T-cell (primary cell): ENCODE measurements at regions of chr6 and their contacts with region 1.

Region 1: DNA sequence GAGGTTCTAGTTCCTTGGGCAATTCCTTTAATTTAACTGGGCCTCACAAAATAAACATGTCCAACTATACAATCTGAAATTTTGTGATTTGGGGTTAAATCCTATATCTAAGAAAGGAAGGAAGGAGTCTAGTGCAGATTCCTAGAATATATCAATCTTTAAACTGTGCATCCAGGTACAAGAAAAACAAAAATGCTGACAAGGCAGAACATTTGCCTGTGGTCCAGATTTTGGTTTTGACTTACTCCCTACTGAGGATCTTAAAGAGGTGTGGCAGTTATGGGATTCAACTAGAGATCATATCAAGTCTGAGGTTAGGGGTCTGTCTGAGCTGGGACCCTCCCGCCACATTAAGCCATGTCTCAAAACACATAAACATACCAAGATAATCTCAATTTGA is 17.7 kb upstream of the COX7A2 start:
- DNase-seq: no peak
- ATAC-seq: no peak
- H3K4me3 ChIP-seq: no peak overlapping the region
- H3K4me3 Mint-ChIP-seq: no peak overlapping the region
- H3K27ac ChIP-seq: no peak overlapping the region
- H3K27ac Mint-ChIP-seq: no peak overlapping the region
- H3K4me1 ChIP-seq: no peaks in the 10 kb centered on the region
- H3K4me1 Mint-ChIP-seq: peaks cover 0 to 3% (median 0%) of the 10 kb centered on the region in 3 donors
- H3K27me3 ChIP-seq: no peaks in the 10 kb centered on the region
- H3K27me3 Mint-ChIP-seq: no peaks in the 10 kb centered on the region

Region 2: GRCh38 chr6:73951183-73951582 is 1310.1 kb before region 1 on chr6:
- CTCF ChIA-PET with region 1: no interaction called
- POLR2A ChIA-PET with region 1: no interaction called
- DNase-seq: no peak
- ATAC-seq: no peak
- H3K4me3 ChIP-seq: no peak overlapping the region
- H3K4me3 Mint-ChIP-seq: no peak overlapping the region
- H3K27ac ChIP-seq: no peak overlapping the region
- H3K27ac Mint-ChIP-seq: no peak overlapping the region
- H3K4me1 ChIP-seq: no peaks in the 10 kb centered on the region
- H3K4me1 Mint-ChIP-seq: no peaks in the 10 kb centered on the region
- H3K27me3 ChIP-seq: peaks cover 0 to 2% of the 10 kb centered on the region in 2 experiments
- H3K27me3 Mint-ChIP-seq: no peaks in the 10 kb centered on the region

Region 3: GRCh38 chr6:75272145-75272840 is 11.0 kb after region 1 on chr6:
- CTCF ChIA-PET with region 1: interaction called, 10 to 20 read pairs
- POLR2A ChIA-PET with region 1: no interaction called
- DNase-seq: no peak
- ATAC-seq: no peak
- H3K4me3 ChIP-seq: no peak overlapping the region
- H3K4me3 Mint-ChIP-seq: no peak overlapping the region
- H3K27ac ChIP-seq: no peak overlapping the region
- H3K27ac Mint-ChIP-seq: peak overlapping the region; percentile 53 to 80
- H3K4me1 ChIP-seq: peaks cover 0 to 5% of the 10 kb centered on the region in 2 experiments
- H3K4me1 Mint-ChIP-seq: peaks cover 64 to 85% (median 78%) of the 10 kb centered on the region in 3 donors
- H3K27me3 ChIP-seq: no peaks in the 10 kb centered on the region
- H3K27me3 Mint-ChIP-seq: no peaks in the 10 kb centered on the region